Activated CD8-positive, alpha-beta T cell treated with anti-CD3 and anti-CD28 coated beads, Interleukin-2, amount 10 ng/mL, durations not matched to agents 7 days and 5 days (primary cell): ENCODE measurements at regions of chr10 and their contacts with region 1.

Region 1: DNA sequence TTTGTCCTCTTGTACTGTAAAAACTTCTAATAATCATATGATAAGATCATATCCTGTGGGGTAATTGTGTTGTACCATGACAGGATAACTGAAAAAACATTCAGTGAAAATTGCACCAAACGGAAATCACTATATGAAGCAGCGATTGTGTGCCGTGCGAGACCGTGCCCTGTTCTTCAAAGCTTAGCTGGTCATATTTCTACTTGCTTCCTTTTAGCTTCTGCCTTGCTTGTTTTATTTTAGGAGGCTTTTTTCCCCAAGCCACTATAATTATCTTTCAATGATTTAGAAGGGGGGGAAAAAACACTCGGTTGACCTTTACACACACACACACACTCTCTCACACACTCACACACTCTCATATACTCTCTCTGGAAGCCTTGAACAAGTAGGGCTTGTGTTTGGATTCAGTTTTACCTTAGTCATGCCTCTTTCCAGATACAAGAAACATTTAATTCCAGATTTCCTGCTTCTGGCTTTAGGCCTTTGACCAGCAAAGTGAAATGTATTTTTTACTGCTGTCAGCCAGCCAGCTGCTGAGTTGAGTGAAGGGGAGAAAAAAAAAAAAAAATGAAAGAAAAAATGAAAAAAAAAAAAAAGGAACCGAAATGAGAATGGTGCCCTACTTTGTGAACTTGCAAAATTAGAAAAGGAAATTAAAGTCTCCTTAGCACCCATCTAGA is 181.4 kb downstream of the ARID5B start:
- DNase-seq: peak; percentile 74
- ATAC-seq: peak; percentile 78
- H3K4me3 Mint-ChIP-seq: peak overlapping the region; percentile 66
- H3K27ac Mint-ChIP-seq: peak overlapping the region; percentile 92
- H3K4me1 Mint-ChIP-seq: peaks cover 68% of the 10 kb centered on the region
- H3K27me3 Mint-ChIP-seq: no peaks in the 10 kb centered on the region

Region 2: DNA sequence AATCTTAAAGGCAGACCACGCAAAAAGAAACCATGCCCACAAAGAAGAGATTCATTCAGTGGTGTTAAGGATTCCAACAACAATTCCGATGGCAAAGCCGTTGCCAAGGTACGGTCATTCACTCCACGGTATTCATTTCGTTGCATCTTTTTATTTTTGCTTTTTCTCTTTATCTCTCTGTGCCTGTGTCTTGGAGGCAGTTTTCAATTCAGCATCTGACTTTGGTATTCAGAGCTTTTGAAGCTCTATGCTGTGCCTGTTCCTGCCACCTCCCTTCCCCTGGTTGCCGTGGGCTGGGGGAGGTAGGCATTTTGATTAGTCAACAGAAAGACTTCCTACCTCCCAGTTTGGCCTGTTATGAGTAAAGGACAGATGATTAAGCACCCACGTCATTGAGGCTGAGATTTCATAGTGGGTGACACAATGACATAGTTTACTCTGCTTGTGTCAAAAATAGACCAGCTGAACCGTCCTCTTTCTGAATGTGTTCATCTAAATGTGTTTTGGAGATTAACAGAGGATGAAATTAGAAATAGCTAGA is 31.9 kb before region 1 on chr10:
- CTCF ChIA-PET with region 1: interaction called, 7 read pairs
- POLR2A ChIA-PET with region 1: interaction called, 40 read pairs
- DNase-seq: peak; percentile 75
- ATAC-seq: peak; percentile 47
- H3K4me3 Mint-ChIP-seq: peak overlapping the region; percentile 77
- H3K27ac Mint-ChIP-seq: peak overlapping the region; percentile 95
- H3K4me1 Mint-ChIP-seq: peaks cover 99% of the 10 kb centered on the region
- H3K27me3 Mint-ChIP-seq: no peaks in the 10 kb centered on the region

Region 3: GRCh38 chr10:62095181-62096071 is 12.6 kb after region 1 on chr10:
- CTCF ChIA-PET with region 1: no interaction called
- POLR2A ChIA-PET with region 1: no interaction called
- DNase-seq: no peak
- ATAC-seq: no peak
- H3K4me3 Mint-ChIP-seq: no peak overlapping the region
- H3K27ac Mint-ChIP-seq: no peak overlapping the region
- H3K4me1 Mint-ChIP-seq: peaks cover 16% of the 10 kb centered on the region
- H3K27me3 Mint-ChIP-seq: no peaks in the 10 kb centered on the region

Region 4: GRCh38 chr10:62121187-62121530 is 38.3 kb after region 1 on chr10:
- CTCF ChIA-PET with region 1: no interaction called
- POLR2A ChIA-PET with region 1: no interaction called
- DNase-seq: no peak
- ATAC-seq: peak; percentile 64
- H3K4me3 Mint-ChIP-seq: no peak overlapping the region
- H3K27ac Mint-ChIP-seq: peak overlapping the region; percentile 68
- H3K4me1 Mint-ChIP-seq: peaks cover 23% of the 10 kb centered on the region
- H3K27me3 Mint-ChIP-seq: no peaks in the 10 kb centered on the region

Region 5: GRCh38 chr10:62193479-62193878 is 110.6 kb after region 1 on chr10:
- CTCF ChIA-PET with region 1: no interaction called
- POLR2A ChIA-PET with region 1: no interaction called
- DNase-seq: no peak
- ATAC-seq: no peak
- H3K4me3 Mint-ChIP-seq: no peak overlapping the region
- H3K27ac Mint-ChIP-seq: no peak overlapping the region
- H3K4me1 Mint-ChIP-seq: peaks cover 20% of the 10 kb centered on the region
- H3K27me3 Mint-ChIP-seq: no peaks in the 10 kb centered on the region